Activated CD4-positive, alpha-beta memory T cell treated with anti-CD3 and anti-CD28 coated beads for 36 hours (primary cell): ENCODE measurements at regions of chr7 and their contacts with region 1.

Region 1: DNA sequence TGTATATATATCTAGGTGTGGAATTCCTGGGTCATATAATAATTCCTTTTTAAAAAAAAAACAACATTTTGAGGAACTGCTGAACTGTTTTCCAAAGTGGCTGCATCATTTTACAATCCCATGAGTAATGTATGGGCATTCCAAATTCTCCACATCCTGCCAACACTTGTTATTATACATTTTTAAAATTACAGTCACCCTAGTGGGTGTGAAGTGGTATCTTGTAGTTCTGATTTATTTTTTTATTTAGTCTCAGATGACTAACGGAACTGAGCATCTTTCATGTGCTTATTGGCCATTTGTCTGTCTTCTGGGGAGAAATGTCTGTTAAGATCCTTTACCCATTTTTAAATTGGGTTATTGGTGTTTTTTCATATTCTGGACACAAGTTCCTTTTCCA is 12.0 kb upstream of the KLHL7 start:
- DNase-seq: no peak
- H3K4me3 Mint-ChIP-seq: no peak overlapping the region
- H3K27ac Mint-ChIP-seq: no peak overlapping the region
- H3K4me1 Mint-ChIP-seq: no peaks in the 10 kb centered on the region
- H3K27me3 Mint-ChIP-seq: peaks cover 3% of the 10 kb centered on the region

Region 2: DNA sequence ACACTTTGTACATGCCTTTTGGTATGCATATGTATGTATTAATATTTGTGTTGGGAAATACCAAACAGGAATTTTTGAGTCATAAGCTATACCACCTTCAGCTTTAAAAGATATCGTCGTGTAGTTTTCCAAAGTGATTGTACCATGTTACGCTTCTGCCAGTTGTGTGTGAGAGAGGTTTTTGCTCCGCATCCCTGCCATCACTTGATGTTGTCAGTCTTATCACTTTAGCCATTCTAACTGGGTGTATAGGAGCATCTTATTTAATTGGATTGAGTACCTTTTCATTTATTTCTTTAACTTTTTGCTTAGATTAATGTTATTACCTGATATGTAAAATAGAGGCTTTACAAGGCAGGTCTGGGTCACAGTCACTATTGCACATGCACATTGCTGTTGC is 15.4 kb after region 1 on chr7:
- CTCF ChIA-PET with region 1: no interaction called
- POLR2A ChIA-PET with region 1: no interaction called
- intact Hi-C with region 1: no loop called
- DNase-seq: no peak
- H3K4me3 Mint-ChIP-seq: no peak overlapping the region
- H3K27ac Mint-ChIP-seq: no peak overlapping the region
- H3K4me1 Mint-ChIP-seq: peaks cover 48% of the 10 kb centered on the region
- H3K27me3 Mint-ChIP-seq: no peaks in the 10 kb centered on the region

Region 3: DNA sequence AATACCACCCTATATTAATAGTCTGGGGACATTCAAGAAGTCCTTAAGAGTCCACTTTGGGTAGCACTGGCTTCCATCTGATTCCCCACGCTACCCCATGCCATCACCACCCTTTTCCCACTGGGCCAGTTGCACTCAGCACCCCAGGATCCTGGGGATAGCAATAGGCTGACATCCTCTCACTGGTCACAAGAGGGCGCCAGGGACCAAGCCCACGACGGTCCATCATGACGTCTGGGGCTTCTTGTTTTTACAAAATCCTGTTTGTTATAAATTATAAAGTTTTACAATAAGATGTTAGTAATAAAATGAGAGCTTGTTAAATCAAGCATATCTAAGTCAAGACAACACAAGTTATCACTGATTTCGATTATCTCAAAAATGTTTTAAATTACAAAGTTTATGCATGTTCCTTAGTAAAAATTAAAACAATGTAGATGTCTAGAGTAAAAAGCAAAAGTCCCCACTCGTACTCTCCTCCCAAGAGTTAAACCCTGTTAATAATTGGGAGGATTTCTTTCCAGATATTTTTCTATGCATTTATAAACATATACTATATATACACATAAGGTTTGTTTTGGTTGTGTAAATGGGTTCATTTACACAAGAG is 168.4 kb after region 1 on chr7:
- CTCF ChIA-PET with region 1: no interaction called
- POLR2A ChIA-PET with region 1: no interaction called
- intact Hi-C with region 1: loop called (anchors 5 kb)
- DNase-seq: peak; percentile 73
- H3K4me3 Mint-ChIP-seq: no peak overlapping the region
- H3K27ac Mint-ChIP-seq: no peak overlapping the region
- H3K4me1 Mint-ChIP-seq: peaks cover 10% of the 10 kb centered on the region
- H3K27me3 Mint-ChIP-seq: peaks cover 7% of the 10 kb centered on the region